HEK293T (cell line): ENCODE measurements at regions of chr12 and their contacts with region 1.

Region 1: GRCh38 chr12:57583008-57583831 is 7.8 kb upstream of the PIP4K2C start:
- DNase-seq: peak; percentile 88

Region 2: GRCh38 chr12:57435293-57435692 is 147.9 kb before region 1 on chr12:
- CTCF ChIA-PET with region 1: no interaction called
- POLR2A ChIA-PET with region 1: no interaction called
- DNase-seq: no peak

Region 3: DNA sequence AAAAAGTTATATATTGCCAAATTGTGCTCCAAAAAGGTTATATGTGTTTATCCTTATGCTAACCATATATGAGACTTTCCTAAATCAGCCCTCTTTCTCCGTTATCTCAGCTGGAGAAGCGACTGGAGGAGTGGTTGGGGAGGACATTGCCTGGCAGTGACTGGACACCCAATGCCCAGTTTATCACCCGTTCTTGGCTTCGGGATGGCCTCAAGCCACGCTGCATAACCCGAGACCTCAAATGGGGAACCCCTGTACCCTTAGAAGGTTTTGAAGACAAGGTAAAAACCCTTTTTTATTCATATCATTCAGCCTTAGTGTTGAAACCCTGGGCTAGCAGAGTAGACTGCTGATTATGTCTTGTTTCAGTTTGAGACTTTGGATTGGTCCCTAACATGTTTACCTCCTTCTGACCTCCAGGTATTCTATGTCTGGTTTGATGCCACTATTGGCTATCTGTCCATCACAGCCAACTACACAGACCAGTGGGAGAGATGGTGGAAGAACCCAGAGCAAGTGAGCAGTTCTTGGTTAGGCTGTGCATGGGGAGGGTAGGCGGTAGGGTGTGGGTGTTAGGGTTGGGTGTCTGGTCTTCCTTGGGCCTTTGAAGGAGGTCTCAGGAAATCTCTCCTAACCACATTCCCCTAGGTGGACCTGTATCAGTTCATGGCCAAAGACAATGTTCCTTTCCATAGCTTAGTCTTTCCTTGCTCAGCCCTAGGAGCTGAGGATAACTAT is 71.5 kb before region 1 on chr12:
- CTCF ChIA-PET with region 1: no interaction called
- POLR2A ChIA-PET with region 1: no interaction called
- DNase-seq: no peak

Region 4: DNA sequence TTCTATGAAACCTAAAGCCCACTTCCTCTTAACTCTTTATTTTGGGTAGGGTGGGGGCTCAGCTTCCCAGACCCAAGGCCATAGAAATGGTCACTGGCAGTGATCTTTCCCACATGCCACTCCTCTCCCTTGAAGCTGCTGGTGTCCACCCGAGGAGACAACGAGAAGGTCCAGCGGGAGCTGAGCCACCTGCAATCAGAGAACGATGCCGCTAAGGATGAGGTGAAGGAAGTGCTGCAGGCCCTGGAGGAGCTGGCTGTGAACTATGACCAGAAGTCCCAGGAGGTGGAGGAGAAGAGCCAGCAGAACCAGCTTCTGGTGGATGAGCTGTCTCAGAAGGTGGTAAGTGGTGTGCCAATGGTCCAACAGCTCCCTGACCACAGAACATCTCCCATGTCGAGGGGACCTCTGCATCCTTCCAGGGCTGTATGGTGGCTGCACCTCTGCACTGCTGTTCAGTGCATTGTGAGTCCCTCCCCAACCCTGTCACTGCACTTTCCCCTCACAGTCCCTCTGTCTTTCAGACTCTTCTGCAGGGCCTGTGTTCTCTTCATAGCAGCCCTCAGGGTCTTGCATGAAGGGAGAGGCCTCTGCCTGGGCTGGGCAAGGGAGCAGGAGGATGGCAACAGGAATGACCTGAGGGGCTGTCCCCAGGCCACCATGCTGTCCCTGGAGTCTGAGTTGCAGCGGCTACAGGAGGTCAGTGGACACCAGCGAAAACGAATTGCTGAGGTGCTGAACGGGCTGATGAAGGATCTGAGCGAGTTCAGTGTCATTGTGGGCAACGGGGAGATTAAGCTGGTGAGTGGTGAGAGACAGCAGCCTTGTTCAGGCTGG is 11.1 kb before region 1 on chr12:
- CTCF ChIA-PET with region 1: interaction called, 11 read pairs
- POLR2A ChIA-PET with region 1: no interaction called
- DNase-seq: no peak

Region 5: GRCh38 chr12:57600395-57600794 is 17.2 kb after region 1 on chr12:
- CTCF ChIA-PET with region 1: interaction called, 10 read pairs
- POLR2A ChIA-PET with region 1: no interaction called
- DNase-seq: no peak

Region 6: GRCh38 chr12:57611108-57611809 is 28.0 kb after region 1 on chr12 and contains the start of gene ARHGEF25:
- CTCF ChIA-PET with region 1: interaction called, 20 read pairs
- POLR2A ChIA-PET with region 1: interaction called, 3 read pairs
- DNase-seq: peak; percentile 91

Region 7: GRCh38 chr12:57621497-57622292 is 38.5 kb after region 1 on chr12:
- CTCF ChIA-PET with region 1: interaction called, 22 read pairs
- POLR2A ChIA-PET with region 1: no interaction called
- DNase-seq: peak; percentile 85

Region 8: GRCh38 chr12:57632694-57633477 is 49.7 kb after region 1 on chr12 and contains the start of gene B4GALNT1:
- CTCF ChIA-PET with region 1: interaction called, 10 read pairs
- POLR2A ChIA-PET with region 1: interaction called, 4 read pairs
- DNase-seq: peak; percentile 91

Region 9: DNA sequence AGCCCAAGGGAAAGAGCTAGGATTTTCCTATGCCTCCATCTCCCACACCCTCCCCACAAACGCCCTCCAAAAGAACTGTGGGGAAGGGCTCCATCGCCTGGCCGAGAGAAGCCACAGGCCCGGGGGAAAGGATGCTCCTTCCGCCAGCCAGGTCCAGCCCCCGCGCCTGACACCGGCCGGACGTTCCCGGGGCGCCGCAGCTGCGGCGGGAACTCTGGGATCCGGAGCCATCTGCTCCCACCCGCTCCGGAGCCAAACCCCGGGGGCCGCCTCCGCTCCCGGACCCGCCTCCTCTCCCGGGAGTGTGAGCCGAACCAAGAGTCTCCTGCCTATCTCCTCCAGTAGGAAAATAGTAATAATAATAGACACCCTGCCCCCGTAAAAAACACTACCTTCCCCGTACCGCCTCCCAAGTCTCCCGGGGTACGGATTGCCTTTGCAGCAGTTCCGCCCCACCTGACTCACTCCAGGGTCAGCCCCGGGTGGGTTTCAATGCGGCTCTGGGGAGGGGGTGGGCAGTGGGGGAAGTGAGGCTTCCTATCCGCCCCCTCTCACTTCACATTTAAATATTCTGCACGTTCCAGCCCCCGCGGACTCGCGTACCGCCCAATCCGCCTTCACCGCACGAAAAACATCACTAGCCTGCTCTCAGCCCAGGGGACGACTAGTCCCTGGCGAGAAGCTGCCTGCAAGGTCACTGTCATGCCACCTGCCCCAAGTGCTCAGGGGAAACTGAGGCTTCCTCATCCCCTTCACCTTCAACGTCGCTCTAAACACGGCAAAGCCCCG is 152.9 kb after region 1 on chr12:
- CTCF ChIA-PET with region 1: interaction called, 20 read pairs
- POLR2A ChIA-PET with region 1: no interaction called
- DNase-seq: peak; percentile 52